AG04450 (cell line): ENCODE measurements at regions of chr2 and their contacts with region 1.

Region 1: DNA sequence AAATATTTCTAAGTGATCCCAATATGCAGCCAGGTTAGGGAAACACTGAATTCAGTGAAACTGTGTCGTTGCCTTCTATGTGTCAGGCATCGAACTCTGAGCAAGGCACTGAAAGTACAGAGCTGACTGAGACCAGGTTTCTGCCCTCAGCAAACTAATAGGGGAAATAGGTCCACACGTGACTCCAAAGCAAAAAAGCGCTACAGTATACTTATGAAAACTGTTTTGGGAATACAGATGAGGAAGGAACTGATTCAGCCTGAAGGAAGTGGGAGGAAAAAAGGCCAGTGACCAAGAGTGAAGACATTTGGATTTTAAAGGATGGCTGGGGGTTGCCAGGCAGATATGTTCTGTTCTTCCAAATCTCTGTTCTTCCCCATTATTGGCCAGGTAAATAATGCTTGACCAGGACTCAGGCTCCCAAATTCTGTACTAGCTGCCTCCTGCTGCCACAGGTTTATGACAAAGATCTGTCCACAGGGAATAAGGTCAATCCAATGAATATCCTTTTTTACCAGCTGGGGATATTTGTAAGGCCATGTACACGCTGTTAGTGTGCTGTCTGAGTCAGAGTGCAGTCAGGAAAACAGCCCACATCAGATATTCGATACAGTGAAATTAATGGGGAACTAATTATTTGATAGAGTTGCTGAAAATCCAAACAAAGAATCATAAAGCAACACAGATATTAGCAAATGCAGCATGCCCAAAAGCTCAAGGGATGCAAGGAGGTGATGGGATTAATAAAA is 24.5 kb upstream of the INPP4A start:
- DNase-seq: no peak
- H3K4me3 ChIP-seq: no peak overlapping the region
- H3K27ac ChIP-seq: no peak overlapping the region
- H3K27me3 ChIP-seq: peaks cover 5% of the 10 kb centered on the region
- CTCF ChIP-seq: no peak

Region 2: GRCh38 chr2:99141110-99142108 is 721.3 kb after region 1 on chr2 and contains the start of gene C2orf15:
- CTCF ChIA-PET with region 1: no interaction called
- POLR2A ChIA-PET with region 1: interaction called, 10 read pairs
- DNase-seq: peak; percentile 38
- H3K4me3 ChIP-seq: peak within 1 kb of the TSS; percentile 85
- H3K27ac ChIP-seq: no peak within 1 kb of the TSS
- H3K27me3 ChIP-seq: peaks cover 5% of the 10 kb centered on the region
- CTCF ChIP-seq: no peak
- polyA plus RNA-seq, gene C2orf15: 0.14 TPM in 1 of 2 replicates, not detected in the other